ENCODE measurements at regions of chr1 and their contacts with region 1.

Region 1: GRCh38 chr1:206489980-206490770 is 17.2 kb upstream of the RASSF5 start:
- DNase-seq: peak; percentile 83
- CTCF ChIP-seq: peak; percentile 88

Region 2: GRCh38 chr1:206461602-206462455 is 28.3 kb before region 1 on chr1:
- CTCF ChIA-PET with region 1: interaction called, 18 read pairs
- POLR2A ChIA-PET with region 1: no interaction called
- DNase-seq: peak; percentile 79
- CTCF ChIP-seq: peak; percentile 81

Region 3: GRCh38 chr1:206479183-206480125 is 10.7 kb before region 1 on chr1:
- CTCF ChIA-PET with region 1: interaction called, 179 read pairs
- POLR2A ChIA-PET with region 1: no interaction called
- DNase-seq: peak; percentile 85
- CTCF ChIP-seq: peak; percentile 74

Region 4: GRCh38 chr1:206544562-206545257 is 54.5 kb after region 1 on chr1:
- CTCF ChIA-PET with region 1: interaction called, 25 read pairs
- POLR2A ChIA-PET with region 1: no interaction called
- DNase-seq: peak; percentile 85
- CTCF ChIP-seq: peak; percentile 93

Region 5: GRCh38 chr1:206575165-206575893 is 85.2 kb after region 1 on chr1:
- CTCF ChIA-PET with region 1: interaction called, 135 read pairs
- POLR2A ChIA-PET with region 1: no interaction called
- DNase-seq: no peak
- CTCF ChIP-seq: no peak

Region 6: GRCh38 chr1:206590025-206590758 is 100.0 kb after region 1 on chr1:
- CTCF ChIA-PET with region 1: interaction called, 135 read pairs
- POLR2A ChIA-PET with region 1: no interaction called
- DNase-seq: peak; percentile 54
- CTCF ChIP-seq: peak; percentile 41

Region 7: GRCh38 chr1:206658264-206658980 is 168.2 kb after region 1 on chr1:
- CTCF ChIA-PET with region 1: interaction called, 35 read pairs
- POLR2A ChIA-PET with region 1: no interaction called
- DNase-seq: peak; percentile 79
- CTCF ChIP-seq: peak; percentile 87

Region 8: DNA sequence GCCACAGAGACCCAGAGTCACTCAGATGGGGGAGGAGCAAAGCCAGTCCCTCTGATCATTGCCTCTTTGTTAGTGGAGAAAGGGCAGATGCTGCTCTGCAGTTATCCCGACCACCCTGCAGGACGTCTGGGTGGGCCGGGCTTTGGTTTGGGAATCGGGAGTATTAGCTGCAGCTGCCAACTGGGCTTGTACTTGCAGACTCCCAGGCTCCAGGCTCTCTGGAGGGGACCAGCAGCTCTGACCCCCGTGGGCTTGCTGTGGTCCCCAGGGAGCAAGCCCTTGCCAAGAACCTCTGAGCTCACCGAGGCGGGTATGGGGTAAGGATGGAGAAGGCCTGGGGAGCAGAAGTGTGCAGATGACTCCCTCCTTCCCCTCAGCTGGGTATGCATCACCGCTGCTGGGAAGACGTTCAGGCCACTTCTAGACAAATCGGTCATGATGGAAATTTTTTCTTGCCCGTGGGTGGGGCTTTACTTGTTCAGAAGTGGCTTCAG is 216.2 kb after region 1 on chr1:
- CTCF ChIA-PET with region 1: no interaction called
- POLR2A ChIA-PET with region 1: no interaction called
- DNase-seq: no peak
- CTCF ChIP-seq: no peak

Region 9: GRCh38 chr1:206719169-206719839 is 229.1 kb after region 1 on chr1:
- CTCF ChIA-PET with region 1: no interaction called
- POLR2A ChIA-PET with region 1: no interaction called
- DNase-seq: peak; percentile 59
- CTCF ChIP-seq: no peak